AG04450 (cell line): ENCODE measurements at regions of chrX and their contacts with region 1.

Region 1: GRCh38 chrX:46408553-46409407 is 136.4 kb downstream of the ZNF674 start:
- DNase-seq: peak; percentile 36
- H3K4me3 ChIP-seq: no peak overlapping the region
- H3K27ac ChIP-seq: no peak overlapping the region
- H3K27me3 ChIP-seq: no peaks in the 10 kb centered on the region
- CTCF ChIP-seq: peak; percentile 68

Region 2: DNA sequence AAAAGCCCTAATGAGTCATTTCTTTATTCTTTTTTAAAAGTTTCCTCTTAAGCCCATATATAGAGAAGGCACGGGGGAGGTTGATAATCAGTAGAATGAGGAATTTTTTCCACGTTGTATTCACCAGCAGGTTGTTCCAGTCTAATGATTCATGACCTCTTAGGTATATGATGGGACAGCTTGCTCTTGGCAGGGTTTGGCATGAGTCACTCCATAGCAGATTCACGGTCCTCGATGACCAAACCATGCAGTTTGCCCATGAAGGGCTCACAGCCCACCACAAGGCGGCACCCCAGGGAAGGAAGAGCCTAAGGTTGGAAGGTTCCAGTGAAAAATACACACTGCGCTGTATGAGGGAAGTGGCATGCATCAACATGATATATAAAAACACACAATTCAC is 584.3 kb before region 1 on chrX:
- CTCF ChIA-PET with region 1: interaction called, 15 read pairs
- POLR2A ChIA-PET with region 1: no interaction called
- DNase-seq: peak; percentile 81
- H3K4me3 ChIP-seq: no peak overlapping the region
- H3K27ac ChIP-seq: no peak overlapping the region
- H3K27me3 ChIP-seq: no peaks in the 10 kb centered on the region
- CTCF ChIP-seq: peak; percentile 81

Region 3: DNA sequence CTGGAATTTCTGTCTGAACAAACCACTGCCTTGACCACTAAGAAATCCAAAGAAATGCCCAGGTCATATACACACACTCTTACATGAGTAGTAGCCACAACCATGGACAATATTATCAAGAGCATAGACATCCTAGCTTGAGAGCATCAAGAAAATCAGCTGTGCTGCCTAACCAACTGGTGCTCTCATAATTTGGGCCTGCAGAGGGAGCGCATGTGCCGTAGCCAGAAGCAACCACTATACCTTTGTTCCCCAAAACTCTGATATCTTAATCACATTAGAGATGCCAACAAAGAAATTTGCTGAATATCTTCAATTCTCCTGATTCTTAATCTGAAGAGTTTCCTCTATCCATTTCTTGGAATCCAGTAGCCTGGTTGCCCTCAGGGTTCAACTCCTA is 27.1 kb before region 1 on chrX:
- CTCF ChIA-PET with region 1: interaction called, 19 read pairs
- POLR2A ChIA-PET with region 1: no interaction called
- DNase-seq: no peak
- H3K4me3 ChIP-seq: no peak overlapping the region
- H3K27ac ChIP-seq: no peak overlapping the region
- H3K27me3 ChIP-seq: no peaks in the 10 kb centered on the region
- CTCF ChIP-seq: peak; percentile 49